MCF 10A (cell line): ENCODE measurements at regions of chr1 and their contacts with region 1.

Region 1: DNA sequence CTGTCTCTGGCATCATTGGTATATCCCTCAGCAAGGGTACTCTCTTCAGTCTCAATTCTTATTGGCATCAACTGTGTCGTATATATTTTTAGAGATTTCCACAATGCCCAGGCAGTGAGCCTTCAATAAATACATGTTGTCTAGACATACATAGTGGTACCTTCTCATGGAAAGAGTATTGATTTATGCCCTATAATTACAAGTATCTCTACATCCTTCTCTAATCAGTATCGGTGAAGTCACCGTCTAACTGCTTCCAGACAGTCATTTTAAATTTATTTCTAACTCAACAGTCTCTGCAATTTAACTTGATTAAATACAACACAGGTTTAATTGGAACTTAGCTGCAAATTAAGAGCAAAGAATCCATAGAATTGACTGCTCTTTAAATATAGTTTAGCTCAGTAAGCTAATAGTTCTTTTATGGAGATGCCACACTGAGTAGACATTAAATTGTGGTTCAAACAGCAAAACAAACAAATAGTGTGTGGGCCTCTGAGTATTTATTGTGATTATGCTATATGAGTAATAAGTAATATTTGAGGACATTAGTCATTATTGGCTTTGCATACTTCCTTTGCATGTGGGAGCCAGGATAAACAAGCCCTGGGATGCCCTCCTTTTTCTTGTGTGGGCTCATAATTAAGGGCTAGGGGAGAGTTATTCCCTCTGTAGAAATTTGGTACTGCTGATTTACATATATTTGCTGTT is 126.9 kb upstream of the DUSP10 start:
- DNase-seq: peak; percentile 83
- H3K4me3 Mint-ChIP-seq: no peak overlapping the region
- H3K27ac Mint-ChIP-seq: peak overlapping the region; percentile 26
- H3K4me1 Mint-ChIP-seq: peaks cover 25% of the 10 kb centered on the region
- H3K27me3 Mint-ChIP-seq: no peaks in the 10 kb centered on the region
- CTCF ChIP-seq: no peak

Region 2: DNA sequence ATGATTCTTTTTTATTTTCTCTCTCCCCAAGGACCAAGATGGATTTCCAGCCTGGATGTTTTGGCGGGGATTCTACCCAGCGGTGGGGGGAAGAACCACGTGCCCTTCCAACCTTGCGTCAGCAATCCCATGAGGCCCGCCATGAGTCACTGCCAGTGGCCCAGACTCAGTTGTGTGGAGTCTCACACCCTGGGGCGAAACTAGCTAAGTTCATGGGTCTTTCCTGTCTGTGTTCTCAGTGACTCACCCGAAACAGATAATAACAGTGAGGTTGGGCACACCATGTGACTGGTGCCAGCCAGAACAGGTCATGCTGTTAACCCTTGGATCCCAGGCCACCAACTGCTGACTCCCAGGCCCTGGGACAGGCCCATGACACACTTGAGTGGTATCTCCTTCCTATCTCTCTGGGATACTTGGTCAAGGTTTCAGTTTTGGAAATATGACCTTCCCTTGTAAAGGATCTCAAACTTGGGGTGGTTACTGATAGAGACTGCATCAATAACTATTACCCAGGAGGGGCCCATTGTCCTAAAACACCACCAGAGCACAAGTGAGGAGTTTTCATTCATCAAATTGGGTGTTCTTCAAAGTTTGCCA is 28.9 kb before region 1 on chr1:
- CTCF ChIA-PET with region 1: no interaction called
- POLR2A ChIA-PET with region 1: interaction called, 11 read pairs
- intact Hi-C with region 1: no loop called
- DNase-seq: peak; percentile 100
- H3K4me3 Mint-ChIP-seq: no peak overlapping the region
- H3K27ac Mint-ChIP-seq: peak overlapping the region; percentile 94
- H3K4me1 Mint-ChIP-seq: peaks cover 63% of the 10 kb centered on the region
- H3K27me3 Mint-ChIP-seq: no peaks in the 10 kb centered on the region
- CTCF ChIP-seq: no peak

Region 3: DNA sequence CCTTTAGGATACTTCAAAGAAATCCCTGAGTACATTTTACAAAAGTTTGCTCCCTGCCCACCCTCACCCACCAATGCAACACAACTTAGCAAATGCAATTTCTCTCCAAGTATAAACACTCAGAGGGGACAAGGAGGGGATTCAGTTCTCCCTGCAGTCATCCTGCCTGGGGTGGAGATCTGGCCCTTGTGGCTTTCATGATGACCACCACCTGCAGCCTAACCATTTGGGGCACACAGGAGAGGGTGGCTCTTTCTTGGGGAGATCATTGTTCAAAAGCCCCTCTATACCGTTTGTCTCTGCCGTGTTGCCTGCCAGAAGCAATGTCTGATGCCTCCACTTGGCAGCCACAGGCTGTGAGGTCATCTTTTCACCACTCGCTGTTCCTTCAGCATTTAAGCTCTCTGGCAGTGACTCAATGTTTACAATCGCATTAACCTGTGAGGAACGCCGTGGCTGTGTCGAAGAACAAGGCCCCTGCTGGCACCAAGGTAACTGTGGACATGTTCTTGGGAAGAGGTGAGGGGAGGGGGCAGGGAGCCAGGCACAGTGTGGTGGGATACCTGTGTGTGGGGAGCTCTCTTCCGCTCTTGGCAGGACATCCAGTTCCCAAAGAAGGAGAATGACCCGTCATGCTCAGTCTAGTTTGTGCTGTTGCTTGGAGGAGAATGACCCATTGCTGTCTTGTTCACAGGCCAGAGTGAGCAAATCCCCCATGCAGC is 22.9 kb before region 1 on chr1:
- CTCF ChIA-PET with region 1: interaction called, 4 read pairs
- POLR2A ChIA-PET with region 1: interaction called, 11 read pairs
- intact Hi-C with region 1: no loop called
- DNase-seq: peak; percentile 97
- H3K4me3 Mint-ChIP-seq: no peak overlapping the region
- H3K27ac Mint-ChIP-seq: peak overlapping the region; percentile 78
- H3K4me1 Mint-ChIP-seq: peaks cover 28% of the 10 kb centered on the region
- H3K27me3 Mint-ChIP-seq: no peaks in the 10 kb centered on the region
- CTCF ChIP-seq: no peak